HEK293T (cell line): ENCODE measurements at regions of chr5 and their contacts with region 1.

Region 1: GRCh38 chr5:37248970-37249686 is at the start of gene CPLANE1:
- DNase-seq: peak; percentile 79

Region 2: GRCh38 chr5:37234288-37234687 is 14.8 kb before region 1 on chr5:
- CTCF ChIA-PET with region 1: interaction called, 3 read pairs
- POLR2A ChIA-PET with region 1: interaction called, 12 read pairs
- DNase-seq: no peak

Region 3: DNA sequence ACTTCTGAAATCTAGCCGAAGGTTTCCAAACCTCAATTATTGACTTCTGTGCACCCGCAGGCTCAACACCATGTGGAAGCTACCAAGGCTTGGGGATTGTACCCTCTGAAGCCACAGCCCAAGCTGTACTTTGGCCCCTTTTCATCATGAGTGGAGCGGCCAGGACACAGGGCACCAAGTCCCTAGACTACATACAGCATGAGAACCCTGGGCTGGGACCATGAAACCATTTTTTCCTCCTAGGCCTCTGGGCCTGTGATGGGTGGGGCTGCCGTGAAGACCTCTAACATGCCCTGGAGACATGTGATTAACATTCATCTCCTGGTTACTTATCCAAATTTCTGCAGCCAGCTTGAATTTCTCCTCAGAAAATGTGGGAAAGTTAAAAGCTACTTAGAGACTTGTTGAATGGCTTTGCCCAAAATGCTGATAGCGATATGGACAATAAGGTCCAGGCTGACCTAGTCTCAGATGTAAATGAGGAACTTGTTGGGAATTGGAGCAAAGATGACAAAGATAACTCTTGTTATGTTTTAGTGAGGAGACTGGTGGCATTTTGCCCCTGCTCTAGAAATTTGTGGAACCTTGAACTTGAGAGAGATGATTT is 34.2 kb after region 1 on chr5:
- CTCF ChIA-PET with region 1: no interaction called
- POLR2A ChIA-PET with region 1: no interaction called
- DNase-seq: no peak

Region 4: DNA sequence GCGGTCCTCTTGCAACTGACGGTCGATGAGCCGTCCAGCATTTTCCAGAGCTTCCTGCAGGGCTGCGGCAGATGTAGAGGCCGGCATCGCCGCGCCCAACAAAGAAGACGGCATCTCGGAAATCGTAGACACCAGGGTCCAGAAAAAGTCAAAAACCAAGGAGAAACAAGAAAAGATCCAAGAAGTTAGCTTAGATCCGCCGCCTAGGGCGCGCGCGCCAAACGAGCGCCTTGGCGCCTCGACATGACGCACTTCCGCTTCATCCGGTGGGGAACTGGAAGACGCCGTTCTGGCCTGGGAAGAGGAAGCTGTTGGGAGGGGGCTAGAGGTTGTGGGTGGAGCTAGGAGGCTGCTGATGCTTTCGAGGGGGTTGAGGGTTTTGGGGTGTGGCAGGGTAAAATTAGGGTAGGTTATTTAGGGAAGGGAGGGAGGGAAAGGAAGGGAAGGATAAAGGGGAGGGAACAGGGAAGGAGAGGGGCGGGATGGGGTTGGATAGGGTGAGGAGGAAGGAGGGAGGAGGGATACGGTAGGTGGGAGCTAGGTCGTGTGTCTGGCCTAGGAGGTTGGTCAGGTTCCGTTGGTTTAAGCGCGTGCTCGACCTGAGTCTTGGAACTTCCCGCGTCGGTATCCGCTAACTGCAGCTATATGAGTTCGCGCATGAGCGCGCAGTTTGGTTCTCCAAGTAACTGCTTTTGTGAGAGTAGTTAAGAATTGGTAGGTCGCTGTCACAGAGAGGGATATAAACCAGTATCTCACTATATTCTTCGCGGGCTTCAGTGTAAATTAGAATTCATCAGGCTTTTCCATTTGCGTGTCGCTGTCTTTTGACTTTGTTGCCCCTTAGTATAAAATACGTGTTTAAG is 122.0 kb after region 1 on chr5 and contains the start of gene NUP155:
- CTCF ChIA-PET with region 1: no interaction called
- POLR2A ChIA-PET with region 1: interaction called, 17 read pairs
- DNase-seq: peak; percentile 92